Activated naive CD4-positive, alpha-beta T cell treated with anti-CD3 and anti-CD28 coated beads, Interleukin-2, amount 10 ng/mL, durations not matched to agents 7 days and 5 days (primary cell): ENCODE measurements at regions of chr14 and their contacts with region 1.

Region 1: DNA sequence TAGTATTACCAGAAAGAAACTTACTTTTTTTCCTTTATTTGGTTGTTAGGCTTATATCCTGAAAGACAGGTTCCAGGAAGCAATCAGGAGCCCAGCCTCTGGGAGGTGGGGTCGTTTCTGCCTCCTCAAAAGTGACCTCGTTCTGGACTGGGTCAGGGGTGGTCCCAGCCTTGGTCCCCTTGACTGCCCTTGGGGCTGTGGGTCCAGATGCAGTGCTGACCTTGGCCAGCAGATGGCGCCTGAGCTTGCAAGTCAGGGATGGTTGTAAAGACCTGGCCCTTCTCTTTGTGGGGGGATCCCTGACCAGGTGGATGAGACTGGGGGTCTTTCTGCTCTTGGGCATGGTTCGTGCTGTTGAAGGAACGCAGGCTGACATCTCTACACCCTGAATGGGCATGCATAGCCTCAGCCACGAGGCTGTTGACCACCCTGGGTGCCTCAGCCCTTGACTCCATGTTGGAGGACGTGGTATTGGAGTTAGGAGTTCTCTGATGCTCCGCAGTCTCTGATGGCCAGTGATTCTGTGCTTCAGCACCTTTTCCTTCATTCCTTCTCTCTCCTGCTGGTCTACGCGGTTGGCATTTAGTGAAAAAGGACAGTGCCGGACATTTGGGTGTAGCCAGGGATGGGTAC is 62.4 kb downstream of the ADCK1 start:
- DNase-seq: peak; percentile 85
- H3K4me3 Mint-ChIP-seq: no peak overlapping the region
- H3K27ac Mint-ChIP-seq: no peak overlapping the region
- H3K4me1 Mint-ChIP-seq: no peaks in the 10 kb centered on the region
- H3K27me3 Mint-ChIP-seq: no peaks in the 10 kb centered on the region

Region 2: DNA sequence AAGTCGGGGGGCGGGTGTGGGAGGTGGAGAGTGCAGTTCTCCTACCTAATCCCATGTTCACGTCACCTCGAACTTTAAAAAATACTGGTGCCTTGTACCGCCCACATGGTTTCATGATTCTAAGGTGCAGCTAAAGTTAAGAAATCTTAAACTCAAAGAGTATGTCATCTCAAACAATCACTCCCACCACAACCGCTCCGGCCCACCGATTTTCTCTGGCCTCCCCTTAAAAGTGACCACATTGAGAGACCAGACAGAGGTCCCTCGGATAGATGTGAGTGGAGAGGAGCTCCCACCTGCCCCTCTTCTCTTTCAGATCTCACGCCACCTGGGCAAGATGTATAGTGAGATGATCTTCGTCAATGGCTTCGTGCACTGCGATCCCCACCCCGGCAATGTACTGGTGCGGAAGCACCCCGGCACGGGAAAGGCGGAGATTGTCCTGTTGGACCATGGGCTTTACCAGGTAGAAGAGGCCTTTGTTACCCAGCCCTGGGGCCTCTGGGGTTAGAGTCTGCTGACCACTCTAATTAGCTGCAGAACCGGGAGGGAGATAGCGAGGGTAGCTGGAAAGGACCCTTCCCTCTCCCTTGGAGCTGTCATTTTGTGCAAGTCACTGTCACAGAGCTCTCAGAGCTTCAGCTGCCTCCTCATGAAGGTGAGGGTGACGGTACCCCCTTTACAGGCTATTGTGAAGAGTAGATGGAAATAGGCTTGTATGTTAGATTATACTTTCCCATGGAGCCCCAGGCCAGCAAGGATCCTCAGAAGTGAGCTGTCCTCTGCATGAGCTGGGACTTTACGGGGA is 62.1 kb after region 1 on chr14:
- CTCF ChIA-PET with region 1: no interaction called
- DNase-seq: no peak
- H3K4me3 Mint-ChIP-seq: no peak overlapping the region
- H3K27ac Mint-ChIP-seq: no peak overlapping the region
- H3K4me1 Mint-ChIP-seq: no peaks in the 10 kb centered on the region
- H3K27me3 Mint-ChIP-seq: no peaks in the 10 kb centered on the region

Region 3: GRCh38 chr14:78073652-78074051 is 211.4 kb after region 1 on chr14:
- CTCF ChIA-PET with region 1: interaction called, 14 read pairs
- DNase-seq: no peak
- H3K4me3 Mint-ChIP-seq: no peak overlapping the region
- H3K27ac Mint-ChIP-seq: no peak overlapping the region
- H3K4me1 Mint-ChIP-seq: no peaks in the 10 kb centered on the region
- H3K27me3 Mint-ChIP-seq: peaks cover 4% of the 10 kb centered on the region